Adrenal gland (tissue), 19 donors: ENCODE measurements at regions of chr1 and their contacts with region 1.

Region 1: GRCh38 chr1:48202030-48202752 is 20.3 kb upstream of the SLC5A9 start:
- DNase-seq: peak; percentile 55 to 89 (median 67)
- H3K4me3 ChIP-seq: no peak overlapping the region
- H3K27ac ChIP-seq: no peak overlapping the region
- H3K4me1 ChIP-seq: no peaks in the 10 kb centered on the region
- H3K27me3 ChIP-seq: no peaks in the 10 kb centered on the region
- CTCF ChIP-seq: peak; percentile 73 to 85 (median 82)
- POLR2A ChIP-seq: no peak

Region 2: DNA sequence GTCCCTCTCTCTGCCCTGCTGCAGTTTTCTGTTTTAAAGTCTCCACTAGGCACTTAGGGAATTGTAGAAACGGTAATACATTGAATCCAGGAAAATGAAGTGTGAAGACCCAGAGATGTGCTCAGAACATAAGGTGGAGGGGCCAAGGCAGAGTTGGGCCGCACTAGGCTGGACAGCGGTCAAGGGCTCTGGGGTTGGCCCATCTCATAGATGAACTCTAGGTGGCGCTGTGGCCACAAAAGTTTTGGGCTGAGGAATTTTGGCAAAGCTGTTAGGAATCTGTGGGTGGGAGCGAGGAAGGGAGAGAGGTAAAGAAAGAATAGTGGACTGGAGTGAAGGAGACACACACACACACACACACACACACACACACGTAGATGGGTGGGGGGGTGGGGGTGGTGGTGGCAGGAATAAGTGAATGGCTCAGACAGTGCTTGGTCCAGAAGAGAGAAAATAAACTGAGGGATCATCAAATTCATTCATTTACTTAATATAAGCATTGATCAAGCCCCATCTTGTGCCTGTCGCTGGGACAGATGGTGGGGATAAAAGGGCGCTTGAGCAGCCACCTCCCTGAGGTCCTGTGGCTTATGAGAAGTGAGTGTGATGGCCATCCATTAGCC is 463.5 kb before region 1 on chr1:
- intact Hi-C with region 1: loop called (anchors 10 kb)
- DNase-seq: peak; percentile 47 to 70 (median 58)
- H3K4me3 ChIP-seq: no peak overlapping the region
- H3K27ac ChIP-seq: no peak overlapping the region
- H3K4me1 ChIP-seq: no peaks in the 10 kb centered on the region
- H3K27me3 ChIP-seq: peaks cover 11% of the 10 kb centered on the region
- CTCF ChIP-seq: peak; percentile 59 to 84 (median 72)
- POLR2A ChIP-seq: no peak

Region 3: GRCh38 chr1:47997289-47998200 is 204.6 kb before region 1 on chr1 and contains the start of gene TRABD2B:
- intact Hi-C with region 1: loop called in 1 of 2 experiments (anchors 10 kb)
- DNase-seq: peak; percentile 71 to 82 (median 76)
- H3K4me3 ChIP-seq: peak within 1 kb of the TSS in 2 of 4 donors; percentile 13 to 71
- H3K27ac ChIP-seq: peak within 1 kb of the TSS in 1 of 5 donors; percentile 77
- H3K4me1 ChIP-seq: peaks cover 0 to 3% of the 10 kb centered on the region in 2 donors
- H3K27me3 ChIP-seq: peaks cover 9% of the 10 kb centered on the region
- CTCF ChIP-seq: peak; percentile 70 to 93 (median 90)
- POLR2A ChIP-seq: no peak
- total RNA-seq, gene TRABD2B: 0.33 to 3.3 (median 0.85) TPM

Region 4: GRCh38 chr1:48109390-48110013 is 92.7 kb before region 1 on chr1:
- intact Hi-C with region 1: loop called (anchors 2 to 10 kb)
- DNase-seq: peak in 4 of 7 donors; percentile 27 to 51 (median 46)
- H3K4me3 ChIP-seq: no peak overlapping the region
- H3K27ac ChIP-seq: no peak overlapping the region
- H3K4me1 ChIP-seq: no peaks in the 10 kb centered on the region
- H3K27me3 ChIP-seq: no peaks in the 10 kb centered on the region
- CTCF ChIP-seq: peak; percentile 66 to 90 (median 83)
- POLR2A ChIP-seq: no peak

Region 5: DNA sequence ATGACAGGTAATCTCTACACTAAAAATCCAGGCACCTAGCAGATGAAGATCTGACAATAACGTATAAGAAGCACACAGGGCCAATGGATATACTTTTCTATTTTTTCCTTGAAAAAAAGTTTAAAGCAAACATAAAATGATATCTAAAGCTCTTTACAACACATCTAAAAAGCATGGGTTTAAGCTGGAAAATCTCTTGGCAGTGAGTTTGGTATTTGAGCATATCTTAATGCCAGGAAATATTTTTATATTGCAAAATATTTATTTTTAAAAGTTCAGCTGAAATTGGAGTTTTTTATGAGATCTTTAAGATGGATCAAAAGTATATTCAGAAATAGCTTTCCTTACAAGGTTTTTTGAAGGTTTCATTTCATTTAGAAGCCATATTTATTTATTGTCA is 60.9 kb after region 1 on chr1:
- intact Hi-C with region 1: no loop called
- DNase-seq: no peak
- H3K4me3 ChIP-seq: no peak overlapping the region
- H3K27ac ChIP-seq: no peak overlapping the region
- H3K4me1 ChIP-seq: no peaks in the 10 kb centered on the region
- H3K27me3 ChIP-seq: no peaks in the 10 kb centered on the region
- CTCF ChIP-seq: no peak
- POLR2A ChIP-seq: no peak

Region 6: GRCh38 chr1:48329486-48329885 is 127.3 kb after region 1 on chr1:
- intact Hi-C with region 1: no loop called
- DNase-seq: no peak
- H3K4me3 ChIP-seq: no peak overlapping the region
- H3K27ac ChIP-seq: no peak overlapping the region
- H3K4me1 ChIP-seq: no peaks in the 10 kb centered on the region
- H3K27me3 ChIP-seq: no peaks in the 10 kb centered on the region
- CTCF ChIP-seq: no peak
- POLR2A ChIP-seq: no peak

Region 7: GRCh38 chr1:48498096-48498791 is 296.1 kb after region 1 on chr1:
- intact Hi-C with region 1: loop called in 1 of 2 experiments (anchors 10 kb)
- DNase-seq: peak; percentile 79 to 96 (median 88)
- H3K4me3 ChIP-seq: no peak overlapping the region
- H3K27ac ChIP-seq: no peak overlapping the region
- H3K4me1 ChIP-seq: peaks cover 16 to 22% of the 10 kb centered on the region in 2 donors
- H3K27me3 ChIP-seq: no peaks in the 10 kb centered on the region
- CTCF ChIP-seq: peak; percentile 86 to 95 (median 90)
- POLR2A ChIP-seq: no peak